Naive thymus-derived CD4-positive, alpha-beta T cell (primary cell): ENCODE measurements at regions of chr22 and their contacts with region 1.

Region 1: DNA sequence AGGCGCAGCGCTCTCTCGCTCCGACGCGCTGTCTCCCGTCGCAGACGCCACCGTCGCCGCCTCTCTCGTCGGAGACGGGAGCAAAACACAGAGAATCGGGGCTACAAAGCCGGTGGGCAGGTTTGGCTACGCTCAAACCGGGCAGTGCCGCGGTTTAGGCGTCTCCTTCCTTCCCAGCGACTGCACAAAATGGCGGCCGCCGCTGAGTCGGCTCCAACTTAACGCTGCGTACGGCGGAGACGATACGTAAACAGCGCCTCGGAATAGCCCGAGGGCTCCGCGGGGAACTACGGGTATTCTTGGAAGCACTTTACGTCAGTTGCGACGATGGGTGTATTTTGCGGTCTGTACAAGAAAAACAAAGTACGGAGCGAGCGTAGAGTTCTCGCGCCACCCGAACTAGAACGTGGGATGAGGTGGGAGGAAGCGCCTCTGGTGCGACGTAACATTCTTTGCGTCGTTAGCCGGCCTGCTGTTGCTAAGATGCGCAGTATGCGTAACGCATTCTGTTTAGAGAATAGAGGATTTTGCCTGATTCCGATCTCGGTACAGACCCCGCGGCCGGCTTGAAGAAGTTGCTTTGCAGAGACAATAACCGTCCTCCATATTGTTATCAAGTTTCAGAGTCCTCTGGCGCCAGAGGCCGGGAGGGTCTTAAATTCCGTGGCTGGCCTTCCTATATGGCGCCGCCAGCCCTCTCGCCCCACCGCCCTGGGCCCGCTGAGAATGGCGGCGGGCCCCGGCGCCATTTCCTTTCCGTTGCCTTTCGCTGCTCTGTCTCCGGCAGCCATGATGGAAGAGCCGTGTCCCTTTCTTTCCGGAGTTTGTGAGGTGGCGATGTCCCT is at the start of gene DDX17:
- DNase-seq: peak; percentile 89 to 99 (median 96)
- ATAC-seq: peak; percentile 94
- H3K4me3 ChIP-seq: peak within 1 kb of the TSS; percentile 88
- H3K4me3 Mint-ChIP-seq: peak within 1 kb of the TSS; percentile 92 to 100 (median 99)
- H3K27ac ChIP-seq: peak within 1 kb of the TSS; percentile 100
- H3K27ac Mint-ChIP-seq: peak within 1 kb of the TSS; percentile 100
- H3K4me1 ChIP-seq: peaks cover 35 to 37% of the 10 kb centered on the region in 2 donors
- H3K4me1 Mint-ChIP-seq: peaks cover 39 to 57% (median 48%) of the 10 kb centered on the region in 7 donors
- H3K27me3 ChIP-seq: no peaks in the 10 kb centered on the region
- H3K27me3 Mint-ChIP-seq: peaks cover 0 to 4% (median 0%) of the 10 kb centered on the region in 5 donors
- total RNA-seq, gene DDX17: 478 to 1,097 (median 684) TPM

Region 2: DNA sequence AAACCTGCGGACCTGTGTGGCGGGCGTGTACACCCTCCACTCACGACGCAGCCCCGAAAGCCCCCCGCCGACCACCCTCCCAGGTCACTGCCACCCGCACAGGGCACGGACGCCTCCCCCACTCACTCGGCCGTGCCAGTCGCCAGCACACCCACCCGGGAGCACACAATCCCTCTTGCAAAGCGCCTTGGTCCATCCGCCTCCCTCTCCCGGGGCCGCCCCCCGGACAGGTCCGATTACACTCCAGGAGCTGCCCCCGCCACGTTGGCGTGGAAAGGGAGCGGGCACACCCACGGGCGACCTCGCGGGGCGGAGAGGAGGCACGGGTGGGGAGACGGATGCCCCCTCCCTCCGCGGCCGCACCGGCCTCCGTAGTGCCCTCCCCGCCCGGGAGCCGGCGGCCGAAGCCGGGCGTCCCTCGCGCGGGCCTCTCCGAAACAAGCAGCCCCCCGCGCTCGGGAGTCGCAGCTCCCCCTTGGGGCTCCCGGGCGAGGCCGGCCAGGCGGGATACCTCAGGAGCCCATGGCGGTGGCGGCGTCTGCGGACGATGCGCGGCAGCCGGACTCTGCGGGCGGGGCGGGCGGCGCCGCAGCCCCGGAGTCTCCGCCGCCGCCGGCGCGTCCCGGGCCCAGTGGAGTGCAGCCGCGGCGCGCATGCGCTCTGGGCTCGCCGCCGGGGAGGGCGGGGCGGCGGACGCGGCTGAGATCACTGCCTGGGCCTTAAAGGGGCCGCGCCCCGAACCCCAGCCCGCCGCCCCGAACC is 233.8 kb before region 1 on chr22 and contains the start of gene TMEM184B:
- CTCF ChIA-PET with region 1: no interaction called
- POLR2A ChIA-PET with region 1: no interaction called
- intact Hi-C with region 1: loop called in 1 of 2 experiments (anchors 1 kb)
- DNase-seq: peak; percentile 71 to 93 (median 87)
- ATAC-seq: peak; percentile 98
- H3K4me3 ChIP-seq: peak within 1 kb of the TSS; percentile 77
- H3K4me3 Mint-ChIP-seq: peak within 1 kb of the TSS; percentile 90 to 96 (median 94)
- H3K27ac ChIP-seq: peak within 1 kb of the TSS; percentile 89
- H3K27ac Mint-ChIP-seq: peak within 1 kb of the TSS; percentile 92 to 99 (median 96)
- H3K4me1 ChIP-seq: peaks cover 19 to 29% of the 10 kb centered on the region in 2 donors
- H3K4me1 Mint-ChIP-seq: peaks cover 33 to 62% (median 54%) of the 10 kb centered on the region in 7 donors
- H3K27me3 ChIP-seq: no peaks in the 10 kb centered on the region
- H3K27me3 Mint-ChIP-seq: peaks cover 0 to 8% (median 0%) of the 10 kb centered on the region in 5 donors
- total RNA-seq, gene TMEM184B: 26.9 to 41.3 (median 35.0) TPM

Region 3: GRCh38 chr22:38383417-38383816 is 122.9 kb before region 1 on chr22:
- CTCF ChIA-PET with region 1: no interaction called
- POLR2A ChIA-PET with region 1: no interaction called
- intact Hi-C with region 1: no loop called
- DNase-seq: no peak
- ATAC-seq: no peak
- H3K4me3 ChIP-seq: no peak overlapping the region
- H3K4me3 Mint-ChIP-seq: no peak overlapping the region
- H3K27ac ChIP-seq: no peak overlapping the region
- H3K27ac Mint-ChIP-seq: no peak overlapping the region
- H3K4me1 ChIP-seq: no peaks in the 10 kb centered on the region
- H3K4me1 Mint-ChIP-seq: peaks cover 0 to 9% (median 0%) of the 10 kb centered on the region in 7 donors
- H3K27me3 ChIP-seq: no peaks in the 10 kb centered on the region
- H3K27me3 Mint-ChIP-seq: no peaks in the 10 kb centered on the region

Region 4: GRCh38 chr22:38412435-38413084 is 93.8 kb before region 1 on chr22:
- CTCF ChIA-PET with region 1: no interaction called
- POLR2A ChIA-PET with region 1: no interaction called
- intact Hi-C with region 1: loop called in 1 of 2 experiments (anchors 5 kb)
- DNase-seq: peak in 8 of 9 donors; percentile 22 to 66 (median 38)
- ATAC-seq: peak; percentile 74
- H3K4me3 ChIP-seq: no peak overlapping the region
- H3K4me3 Mint-ChIP-seq: peak overlapping the region in 3 of 10 donors; percentile 12 to 61 (median 51)
- H3K27ac ChIP-seq: no peak overlapping the region
- H3K27ac Mint-ChIP-seq: no peak overlapping the region
- H3K4me1 ChIP-seq: no peaks in the 10 kb centered on the region
- H3K4me1 Mint-ChIP-seq: peaks cover 0 to 5% (median 0%) of the 10 kb centered on the region in 7 donors
- H3K27me3 ChIP-seq: no peaks in the 10 kb centered on the region
- H3K27me3 Mint-ChIP-seq: peaks cover 0 to 3% (median 0%) of the 10 kb centered on the region in 5 donors

Region 5: DNA sequence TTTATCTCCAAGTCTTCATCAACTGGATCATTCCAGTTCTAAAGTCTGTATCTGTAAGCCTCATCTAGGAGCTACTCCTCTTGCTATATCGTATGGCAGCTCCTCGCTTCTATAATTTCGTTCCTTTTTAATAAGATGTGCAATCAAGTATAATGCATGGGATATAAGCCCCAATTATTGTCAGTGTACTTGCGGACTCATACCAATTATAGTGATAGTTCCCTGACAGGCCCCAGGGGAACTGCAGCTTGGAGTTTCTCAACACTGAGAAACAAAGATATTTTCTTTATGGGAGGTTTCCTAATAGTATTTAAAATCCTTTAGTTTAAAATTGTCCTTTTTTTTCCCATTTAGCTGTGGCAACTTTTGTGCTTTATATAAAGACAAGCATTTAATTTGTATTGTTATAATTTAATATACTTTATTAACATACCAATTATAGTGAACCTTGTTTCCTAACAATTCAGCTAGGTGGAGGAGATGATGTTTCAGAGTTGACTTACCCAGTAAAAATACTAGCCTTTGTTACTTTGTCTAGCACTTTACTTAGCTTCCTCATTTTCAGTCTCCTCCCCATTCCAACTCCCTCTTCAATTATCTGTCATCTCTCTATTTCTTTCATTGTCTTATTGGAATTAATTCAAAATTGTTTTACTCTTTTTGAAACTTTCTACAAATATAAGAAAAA is 25.1 kb after region 1 on chr22:
- CTCF ChIA-PET with region 1: interaction called, 4 read pairs
- POLR2A ChIA-PET with region 1: interaction called, 4 read pairs
- intact Hi-C with region 1: loop called in 1 of 2 experiments (anchors 1 kb)
- DNase-seq: no peak
- ATAC-seq: peak; percentile 41
- H3K4me3 ChIP-seq: no peak overlapping the region
- H3K4me3 Mint-ChIP-seq: peak overlapping the region; percentile 3 to 80 (median 64)
- H3K27ac ChIP-seq: peak overlapping the region; percentile 50
- H3K27ac Mint-ChIP-seq: peak overlapping the region; percentile 82 to 90 (median 84)
- H3K4me1 ChIP-seq: peaks cover 0 to 14% of the 10 kb centered on the region in 2 donors
- H3K4me1 Mint-ChIP-seq: peaks cover 6 to 26% (median 16%) of the 10 kb centered on the region in 7 donors
- H3K27me3 ChIP-seq: no peaks in the 10 kb centered on the region
- H3K27me3 Mint-ChIP-seq: no peaks in the 10 kb centered on the region

Region 6: GRCh38 chr22:38681784-38682335 is 175.5 kb after region 1 on chr22 and contains the start of gene TOMM22:
- CTCF ChIA-PET with region 1: no interaction called
- POLR2A ChIA-PET with region 1: no interaction called
- intact Hi-C with region 1: loop called (anchors 1 to 5 kb)
- DNase-seq: peak; percentile 74 to 88 (median 83)
- ATAC-seq: peak; percentile 98
- H3K4me3 ChIP-seq: peak within 1 kb of the TSS; percentile 85
- H3K4me3 Mint-ChIP-seq: peak within 1 kb of the TSS; percentile 93 to 100 (median 99)
- H3K27ac ChIP-seq: peak within 1 kb of the TSS; percentile 87
- H3K27ac Mint-ChIP-seq: peak within 1 kb of the TSS; percentile 89 to 99 (median 98)
- H3K4me1 ChIP-seq: peaks cover 5 to 11% of the 10 kb centered on the region in 2 donors
- H3K4me1 Mint-ChIP-seq: peaks cover 12 to 28% (median 24%) of the 10 kb centered on the region in 7 donors
- H3K27me3 ChIP-seq: no peaks in the 10 kb centered on the region
- H3K27me3 Mint-ChIP-seq: no peaks in the 10 kb centered on the region
- total RNA-seq, gene TOMM22: 45.0 to 92.4 (median 50.6) TPM

Region 7: GRCh38 chr22:38733329-38733723 is 227.0 kb after region 1 on chr22:
- CTCF ChIA-PET with region 1: no interaction called
- POLR2A ChIA-PET with region 1: no interaction called
- intact Hi-C with region 1: no loop called
- DNase-seq: peak in 5 of 9 donors; percentile 37 to 55 (median 49)
- ATAC-seq: peak; percentile 67
- H3K4me3 ChIP-seq: no peak overlapping the region
- H3K4me3 Mint-ChIP-seq: peak overlapping the region in 4 of 10 donors; percentile 11 to 51 (median 40)
- H3K27ac ChIP-seq: peak overlapping the region; percentile 54
- H3K27ac Mint-ChIP-seq: peak overlapping the region; percentile 76 to 91 (median 87)
- H3K4me1 ChIP-seq: peaks cover 15 to 18% of the 10 kb centered on the region in 2 donors
- H3K4me1 Mint-ChIP-seq: peaks cover 25 to 63% (median 53%) of the 10 kb centered on the region in 7 donors
- H3K27me3 ChIP-seq: no peaks in the 10 kb centered on the region
- H3K27me3 Mint-ChIP-seq: no peaks in the 10 kb centered on the region

Region 8: GRCh38 chr22:38793721-38794466 is 287.6 kb after region 1 on chr22 and contains the start of gene DNAL4:
- CTCF ChIA-PET with region 1: no interaction called
- POLR2A ChIA-PET with region 1: no interaction called
- intact Hi-C with region 1: loop called in 1 of 2 experiments (anchors 1 kb)
- DNase-seq: peak; percentile 64 to 95 (median 93)
- ATAC-seq: peak; percentile 99
- H3K4me3 ChIP-seq: peak within 1 kb of the TSS; percentile 75
- H3K4me3 Mint-ChIP-seq: peak within 1 kb of the TSS; percentile 86 to 97 (median 92)
- H3K27ac ChIP-seq: peak within 1 kb of the TSS; percentile 89
- H3K27ac Mint-ChIP-seq: peak within 1 kb of the TSS; percentile 78 to 96 (median 91)
- H3K4me1 ChIP-seq: peaks cover 13 to 26% of the 10 kb centered on the region in 2 donors
- H3K4me1 Mint-ChIP-seq: peaks cover 20 to 44% (median 34%) of the 10 kb centered on the region in 7 donors
- H3K27me3 ChIP-seq: no peaks in the 10 kb centered on the region
- H3K27me3 Mint-ChIP-seq: peaks cover 0 to 27% (median 0%) of the 10 kb centered on the region in 5 donors
- total RNA-seq, gene DNAL4: 5.0 to 11.1 (median 8.9) TPM